Left ventricle myocardium superior (tissue), 1 donor: ENCODE measurements at regions of chr15 and their contacts with region 1.

Region 1: DNA sequence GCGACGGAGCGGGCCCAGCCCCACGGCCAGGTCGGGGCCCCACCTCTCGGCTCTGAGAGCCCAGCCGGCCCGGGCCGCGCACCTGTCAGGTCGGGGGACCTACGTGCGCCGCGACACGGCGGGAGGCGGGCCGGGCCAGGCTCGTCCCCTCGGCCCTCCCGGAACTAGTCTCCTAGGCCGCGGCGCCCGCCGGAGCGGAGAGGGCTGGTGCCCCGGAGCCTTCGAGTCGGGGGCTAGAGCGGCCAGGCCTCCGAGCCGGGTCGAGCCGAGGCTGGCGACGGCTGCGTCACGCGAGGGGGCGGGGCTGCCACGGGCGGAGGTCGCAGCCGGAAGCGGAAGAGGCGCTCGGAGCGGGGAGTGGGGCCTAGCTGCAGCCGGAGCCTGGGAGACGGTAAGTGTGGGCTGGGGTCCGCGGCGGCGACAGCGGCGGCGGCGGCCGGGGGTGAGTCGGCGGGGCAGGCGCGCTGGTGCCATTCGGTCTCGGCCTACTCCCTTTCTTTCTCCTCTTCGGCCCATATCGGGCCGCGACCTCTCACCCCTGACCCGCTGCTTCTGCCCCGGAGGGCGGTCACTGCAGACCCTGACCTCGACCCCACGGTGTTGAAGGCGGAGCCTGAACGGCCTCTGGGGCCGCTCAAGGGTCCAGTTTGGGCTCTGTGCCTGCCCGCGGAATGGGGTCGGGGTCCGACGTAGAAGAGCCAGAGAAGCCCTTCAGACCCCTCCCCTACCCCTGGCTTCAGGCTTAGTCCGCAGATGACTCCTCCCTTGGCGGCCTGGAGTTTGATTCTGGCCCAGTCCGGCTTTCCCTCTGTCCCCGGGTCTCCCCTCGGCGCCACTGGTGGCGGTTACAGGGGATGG is at the start of gene CLK3:
- DNase-seq: peak; percentile 99
- ATAC-seq: peak; percentile 87
- total RNA-seq, gene CLK3: 55.3 TPM

Region 2: GRCh38 chr15:74540761-74541493 is 74.8 kb before region 1 on chr15 and contains the start of gene ARID3B:
- intact Hi-C with region 1: loop called (anchors 10 kb)
- DNase-seq: peak; percentile 98
- ATAC-seq: peak; percentile 99
- total RNA-seq, gene ARID3B: 2.0 TPM